Right ventricle myocardium inferior (tissue), 1 donor: ENCODE measurements at regions of chr3 and their contacts with region 1.

Region 1: DNA sequence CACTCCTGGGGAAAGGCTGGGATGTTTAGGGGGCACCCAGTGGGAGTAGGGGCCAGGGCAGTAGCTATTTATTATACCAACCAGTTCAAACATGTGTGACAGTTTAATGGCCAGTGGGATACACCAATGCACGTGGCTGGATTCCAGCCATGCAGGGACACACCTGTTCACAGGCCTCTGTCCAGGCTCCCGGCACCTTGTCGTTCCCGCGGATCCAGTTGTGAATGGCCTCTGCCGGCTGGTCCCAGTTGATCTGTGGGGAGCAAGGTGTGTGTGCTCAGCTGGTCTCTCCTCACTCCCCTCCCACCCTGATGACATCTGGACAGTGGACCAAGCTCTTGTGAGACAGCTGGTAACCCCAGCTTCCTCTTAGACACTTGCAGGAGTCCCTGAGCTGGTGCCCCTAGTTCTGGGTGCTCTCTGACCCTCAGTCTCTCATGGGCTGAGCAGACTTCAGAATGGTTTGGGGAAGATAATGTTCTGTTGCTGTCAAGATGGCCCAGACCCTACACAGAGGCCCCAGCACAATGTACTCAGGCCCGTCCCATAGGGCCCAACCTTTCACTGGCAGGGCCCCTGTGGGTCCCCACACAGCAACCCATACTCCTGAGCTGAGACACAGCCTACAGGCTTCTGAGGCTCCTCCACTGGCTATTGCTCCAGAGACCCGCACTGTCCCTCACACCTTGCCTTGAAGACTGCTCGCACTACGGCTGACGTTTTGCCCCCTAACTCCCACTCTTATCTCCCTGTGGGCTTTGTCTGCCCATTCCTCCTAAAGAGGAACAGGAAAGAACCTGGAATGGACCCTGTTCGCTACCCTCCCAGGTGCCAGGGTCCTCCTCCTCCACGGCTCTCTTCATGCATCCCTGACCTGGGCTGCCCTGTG is 25.8 kb downstream of the ALDH1L1 start:
- DNase-seq: no peak
- ATAC-seq: no peak

Region 2: DNA sequence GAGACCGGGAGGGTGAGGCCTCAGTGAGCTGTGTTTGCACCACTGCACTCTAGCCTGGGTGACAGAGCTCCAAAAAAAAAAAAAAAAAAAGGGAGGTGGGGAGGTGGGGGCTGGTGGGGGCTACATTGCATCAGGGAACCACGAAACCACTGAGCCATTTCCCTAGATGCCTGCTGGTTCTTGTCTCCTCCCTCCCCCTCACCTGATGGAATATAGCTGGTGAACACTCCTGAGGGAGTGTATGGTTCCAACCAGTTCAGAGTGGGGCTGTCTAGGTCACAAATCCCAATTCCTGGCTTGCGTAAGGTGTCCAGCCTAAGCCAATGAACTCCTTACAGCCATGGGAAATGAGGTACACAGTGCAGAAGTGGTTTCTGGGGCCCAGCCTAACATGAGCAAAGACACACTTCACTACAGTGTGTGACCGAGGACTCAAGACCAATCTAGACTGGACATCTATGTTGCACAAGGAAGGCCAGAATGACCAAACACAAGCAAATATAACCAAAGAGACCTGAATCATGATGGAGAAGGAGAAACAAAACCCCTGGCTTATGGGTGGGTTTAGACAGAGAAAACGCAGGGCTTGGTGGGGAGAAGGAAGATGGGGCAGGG is 520.2 kb before region 1 on chr3:
- intact Hi-C with region 1: no loop called
- DNase-seq: no peak
- ATAC-seq: no peak

Region 3: GRCh38 chr3:126186271-126186670 is 31.6 kb after region 1 on chr3:
- intact Hi-C with region 1: loop called (anchors 5 kb)
- DNase-seq: no peak
- ATAC-seq: no peak